ENCODE measurements at regions of chr11 and their contacts with region 1.

Region 1: GRCh38 chr11:95067039-95067840 is 521 bp downstream of the SRSF8 start:
- DNase-seq: peak; percentile 72 to 80 (median 78)
- H3K4me3 ChIP-seq: peak overlapping the region; percentile 92 to 96
- H3K4me3 Mint-ChIP-seq: peak overlapping the region; percentile 94 to 98 (median 96)
- H3K27ac ChIP-seq: peak overlapping the region; percentile 95
- H3K27ac Mint-ChIP-seq: peak overlapping the region; percentile 94 to 98 (median 96)
- H3K4me1 ChIP-seq: peaks cover 32% of the 10 kb centered on the region
- H3K4me1 Mint-ChIP-seq: peaks cover 20 to 35% (median 29%) of the 10 kb centered on the region in 4 donors
- H3K27me3 ChIP-seq: no peaks in the 10 kb centered on the region
- H3K27me3 Mint-ChIP-seq: peaks cover 0 to 3% of the 10 kb centered on the region in 2 donors

Region 2: GRCh38 chr11:93741094-93741881 is 1326.0 kb before region 1 on chr11 and contains the starts of genes C11orf54 and TAF1D:
- CTCF ChIA-PET with region 1: no interaction called
- POLR2A ChIA-PET with region 1: interaction called, 14 read pairs
- intact Hi-C with region 1: no loop called
- DNase-seq: peak; percentile 96 to 98 (median 97)
- H3K4me3 ChIP-seq: peak within 1 kb of the TSS; percentile 85 to 98
- H3K4me3 Mint-ChIP-seq: peak within 1 kb of the TSS; percentile 98 to 100 (median 100)
- H3K27ac ChIP-seq: peak within 1 kb of the TSS; percentile 93
- H3K27ac Mint-ChIP-seq: peak within 1 kb of the TSS; percentile 98 to 100 (median 99)
- H3K4me1 ChIP-seq: peaks cover 51% of the 10 kb centered on the region
- H3K4me1 Mint-ChIP-seq: peaks cover 41 to 77% (median 57%) of the 10 kb centered on the region in 4 donors
- H3K27me3 ChIP-seq: no peaks in the 10 kb centered on the region
- H3K27me3 Mint-ChIP-seq: no peaks in the 10 kb centered on the region
- total RNA-seq, gene C11orf54: 31.2 to 36.4 TPM
- total RNA-seq, gene TAF1D: 198 to 199 TPM

Region 3: DNA sequence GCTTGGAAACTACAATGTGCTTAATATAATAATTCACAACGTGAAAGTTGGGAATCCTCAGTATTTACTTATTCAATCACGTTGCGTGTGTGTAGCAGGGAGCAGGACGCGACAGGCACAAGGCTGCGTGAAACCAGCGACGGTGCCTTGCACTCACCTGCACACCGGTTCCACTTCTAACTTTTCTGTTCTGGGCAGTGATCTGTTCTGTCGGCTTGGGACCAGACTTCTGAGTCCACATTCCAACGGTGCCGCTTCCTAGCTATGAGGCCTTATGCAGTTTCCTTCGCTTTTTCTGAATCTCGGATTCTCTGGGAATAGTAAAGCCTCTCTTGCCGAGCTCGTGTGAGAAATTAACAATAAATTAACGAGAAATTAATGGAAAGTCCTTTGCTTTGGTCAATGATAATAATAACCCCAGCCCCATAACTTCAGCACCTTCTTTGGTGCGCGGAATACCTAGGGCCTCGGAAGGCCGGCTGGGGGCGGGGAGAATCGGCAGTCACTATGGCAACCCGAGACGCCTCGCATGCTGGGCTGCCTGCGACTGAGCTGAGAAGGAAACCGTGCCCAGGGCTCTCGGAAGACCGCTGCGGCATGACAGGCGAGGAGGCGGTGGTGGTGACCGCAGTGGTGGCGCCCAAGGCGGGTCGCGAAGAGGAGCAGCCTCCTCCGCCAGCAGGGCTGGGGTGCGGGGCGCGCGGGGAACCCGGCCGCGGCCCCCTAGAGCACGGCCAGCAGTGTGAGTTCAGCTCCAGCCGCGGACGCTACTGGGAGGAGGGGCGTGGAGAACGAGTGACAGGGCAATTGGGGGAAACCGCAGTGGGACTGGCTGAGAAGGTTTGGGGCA is 555.1 kb before region 1 on chr11 and contains the start of gene C11orf97:
- CTCF ChIA-PET with region 1: no interaction called
- POLR2A ChIA-PET with region 1: no interaction called
- intact Hi-C with region 1: no loop called
- DNase-seq: peak; percentile 36 to 46 (median 41)
- H3K4me3 ChIP-seq: peak within 1 kb of the TSS in 1 of 2 donors; percentile 51
- H3K4me3 Mint-ChIP-seq: peak within 1 kb of the TSS; percentile 73 to 85 (median 80)
- H3K27ac ChIP-seq: no peak within 1 kb of the TSS
- H3K27ac Mint-ChIP-seq: peak within 1 kb of the TSS in 3 of 7 donors; percentile 19 to 73 (median 47)
- H3K4me1 ChIP-seq: peaks cover 13% of the 10 kb centered on the region
- H3K4me1 Mint-ChIP-seq: peaks cover 10 to 17% (median 13%) of the 10 kb centered on the region in 4 donors
- H3K27me3 ChIP-seq: no peaks in the 10 kb centered on the region
- H3K27me3 Mint-ChIP-seq: peaks cover 9 to 12% of the 10 kb centered on the region in 2 donors
- total RNA-seq, gene C11orf97: not detected

Region 4: GRCh38 chr11:94926698-94927237 is 140.5 kb before region 1 on chr11:
- CTCF ChIA-PET with region 1: interaction called, 3 read pairs
- POLR2A ChIA-PET with region 1: interaction called, 26 read pairs
- intact Hi-C with region 1: no loop called
- DNase-seq: no peak
- H3K4me3 ChIP-seq: no peak overlapping the region
- H3K4me3 Mint-ChIP-seq: peak overlapping the region in 1 of 8 donors; percentile 29
- H3K27ac ChIP-seq: no peak overlapping the region
- H3K27ac Mint-ChIP-seq: peak overlapping the region in 2 of 7 donors; percentile 43 to 52
- H3K4me1 ChIP-seq: peaks cover 50% of the 10 kb centered on the region
- H3K4me1 Mint-ChIP-seq: peaks cover 35 to 67% (median 41%) of the 10 kb centered on the region in 4 donors
- H3K27me3 ChIP-seq: no peaks in the 10 kb centered on the region
- H3K27me3 Mint-ChIP-seq: peaks cover 0 to 1% of the 10 kb centered on the region in 2 donors

Region 5: GRCh38 chr11:95055283-95055897 is 11.8 kb before region 1 on chr11:
- CTCF ChIA-PET with region 1: interaction called, 10 read pairs
- POLR2A ChIA-PET with region 1: interaction called, 12 read pairs
- intact Hi-C with region 1: no loop called
- DNase-seq: no peak
- H3K4me3 ChIP-seq: no peak overlapping the region
- H3K4me3 Mint-ChIP-seq: no peak overlapping the region
- H3K27ac ChIP-seq: no peak overlapping the region
- H3K27ac Mint-ChIP-seq: no peak overlapping the region
- H3K4me1 ChIP-seq: no peaks in the 10 kb centered on the region
- H3K4me1 Mint-ChIP-seq: no peaks in the 10 kb centered on the region
- H3K27me3 ChIP-seq: peaks cover 5% of the 10 kb centered on the region
- H3K27me3 Mint-ChIP-seq: peaks cover 24 to 30% of the 10 kb centered on the region in 2 donors

Region 6: DNA sequence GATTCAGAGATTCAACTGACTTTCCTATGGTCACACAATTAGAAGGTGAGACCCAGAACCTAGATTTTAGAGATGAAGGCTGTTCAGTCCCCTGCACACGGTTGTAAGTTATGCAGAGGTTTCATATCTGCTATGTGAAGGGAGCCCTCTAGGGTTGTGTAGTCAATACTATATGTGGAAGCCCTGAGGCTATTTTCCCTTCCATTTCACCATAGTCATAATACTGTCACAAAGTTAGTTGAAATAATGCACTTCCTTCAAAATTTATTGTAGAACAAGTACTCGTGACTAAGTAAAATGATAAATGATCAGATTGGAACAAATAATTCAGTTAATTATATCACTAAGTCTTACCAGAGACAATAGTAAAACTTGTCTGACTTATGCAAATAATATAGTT is 71.2 kb after region 1 on chr11:
- CTCF ChIA-PET with region 1: interaction called, 11 read pairs
- POLR2A ChIA-PET with region 1: interaction called, 4 read pairs
- intact Hi-C with region 1: no loop called
- DNase-seq: no peak
- H3K4me3 ChIP-seq: no peak overlapping the region
- H3K4me3 Mint-ChIP-seq: no peak overlapping the region
- H3K27ac ChIP-seq: no peak overlapping the region
- H3K27ac Mint-ChIP-seq: no peak overlapping the region
- H3K4me1 ChIP-seq: no peaks in the 10 kb centered on the region
- H3K4me1 Mint-ChIP-seq: peaks cover 0 to 2% (median 0%) of the 10 kb centered on the region in 4 donors
- H3K27me3 ChIP-seq: no peaks in the 10 kb centered on the region
- H3K27me3 Mint-ChIP-seq: peaks cover 0 to 10% of the 10 kb centered on the region in 2 donors

Region 7: GRCh38 chr11:95764267-95764898 is 697.1 kb after region 1 on chr11:
- CTCF ChIA-PET with region 1: interaction called, 19 read pairs
- POLR2A ChIA-PET with region 1: interaction called, 6 read pairs
- intact Hi-C with region 1: loop called (anchors 1 kb)
- DNase-seq: peak in 4 of 5 donors; percentile 65 to 69 (median 67)
- H3K4me3 ChIP-seq: no peak overlapping the region
- H3K4me3 Mint-ChIP-seq: no peak overlapping the region
- H3K27ac ChIP-seq: no peak overlapping the region
- H3K27ac Mint-ChIP-seq: no peak overlapping the region
- H3K4me1 ChIP-seq: no peaks in the 10 kb centered on the region
- H3K4me1 Mint-ChIP-seq: no peaks in the 10 kb centered on the region
- H3K27me3 ChIP-seq: no peaks in the 10 kb centered on the region
- H3K27me3 Mint-ChIP-seq: peaks cover 0 to 2% of the 10 kb centered on the region in 2 donors

Region 8: DNA sequence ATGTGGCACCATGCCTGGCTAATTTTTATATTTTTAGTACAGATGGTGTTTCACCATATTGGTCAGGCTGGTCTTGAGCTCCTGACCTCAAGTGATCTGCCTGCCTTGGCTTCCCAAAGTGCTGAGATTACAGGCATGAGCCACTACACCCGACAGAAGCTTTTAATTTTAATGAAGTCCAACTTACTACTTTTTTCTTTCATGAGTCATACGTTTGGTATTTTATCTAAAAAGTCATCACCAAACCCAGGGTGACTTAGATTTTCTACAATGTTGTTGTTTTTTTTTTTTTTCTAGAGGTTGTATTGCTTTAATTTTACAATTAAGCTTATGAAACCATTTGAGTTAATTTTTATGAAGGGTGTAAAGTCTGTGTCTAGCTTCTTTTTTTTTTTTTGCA is 1357.5 kb after region 1 on chr11:
- CTCF ChIA-PET with region 1: no interaction called
- POLR2A ChIA-PET with region 1: no interaction called
- intact Hi-C with region 1: loop called (anchors 5 kb)
- DNase-seq: no peak
- H3K4me3 ChIP-seq: no peak overlapping the region
- H3K4me3 Mint-ChIP-seq: no peak overlapping the region
- H3K27ac ChIP-seq: no peak overlapping the region
- H3K27ac Mint-ChIP-seq: no peak overlapping the region
- H3K4me1 ChIP-seq: no peaks in the 10 kb centered on the region
- H3K4me1 Mint-ChIP-seq: peaks cover 0 to 3% (median under 1%) of the 10 kb centered on the region in 4 donors
- H3K27me3 ChIP-seq: peaks cover 4% of the 10 kb centered on the region
- H3K27me3 Mint-ChIP-seq: peaks cover 29 to 31% of the 10 kb centered on the region in 2 donors